T47D (cell line): ENCODE measurements at regions of chr11 and their contacts with region 1.

Region 1: GRCh38 chr11:125902927-125903710 is at the start of gene PUS3:
- DNase-seq: peak; percentile 96 to 97

Region 2: GRCh38 chr11:125807909-125808308 is 95.2 kb before region 1 on chr11:
- in situ Hi-C with region 1: no loop called
- DNase-seq: no peak

Region 3: GRCh38 chr11:126194121-126194543 is 291.0 kb after region 1 on chr11:
- in situ Hi-C with region 1: loop called (anchors 25 kb)
- DNase-seq: peak; percentile 74 to 84